Vagina (tissue), 2 donors: ENCODE measurements at regions of chr2 and their contacts with region 1.

Region 1: GRCh38 chr2:99569386-99569785 is 79.6 kb upstream of the REV1 start:
- DNase-seq: no peak
- H3K4me3 ChIP-seq: no peak overlapping the region
- H3K27ac ChIP-seq: no peak overlapping the region
- H3K4me1 ChIP-seq: peaks cover 22% of the 10 kb centered on the region
- H3K27me3 ChIP-seq: no peaks in the 10 kb centered on the region
- CTCF ChIP-seq: no peak
- POLR2A ChIP-seq: no peak

Region 2: GRCh38 chr2:99806758-99807157 is 237.4 kb after region 1 on chr2:
- intact Hi-C with region 1: loop called (anchors 5 kb)
- DNase-seq: no peak
- H3K4me3 ChIP-seq: no peak overlapping the region
- H3K27ac ChIP-seq: no peak overlapping the region
- H3K4me1 ChIP-seq: no peaks in the 10 kb centered on the region
- H3K27me3 ChIP-seq: no peaks in the 10 kb centered on the region
- CTCF ChIP-seq: no peak
- POLR2A ChIP-seq: no peak